Psoas muscle (tissue), 8 donors: ENCODE measurements at regions of chr16 and their contacts with region 1.

Region 1: DNA sequence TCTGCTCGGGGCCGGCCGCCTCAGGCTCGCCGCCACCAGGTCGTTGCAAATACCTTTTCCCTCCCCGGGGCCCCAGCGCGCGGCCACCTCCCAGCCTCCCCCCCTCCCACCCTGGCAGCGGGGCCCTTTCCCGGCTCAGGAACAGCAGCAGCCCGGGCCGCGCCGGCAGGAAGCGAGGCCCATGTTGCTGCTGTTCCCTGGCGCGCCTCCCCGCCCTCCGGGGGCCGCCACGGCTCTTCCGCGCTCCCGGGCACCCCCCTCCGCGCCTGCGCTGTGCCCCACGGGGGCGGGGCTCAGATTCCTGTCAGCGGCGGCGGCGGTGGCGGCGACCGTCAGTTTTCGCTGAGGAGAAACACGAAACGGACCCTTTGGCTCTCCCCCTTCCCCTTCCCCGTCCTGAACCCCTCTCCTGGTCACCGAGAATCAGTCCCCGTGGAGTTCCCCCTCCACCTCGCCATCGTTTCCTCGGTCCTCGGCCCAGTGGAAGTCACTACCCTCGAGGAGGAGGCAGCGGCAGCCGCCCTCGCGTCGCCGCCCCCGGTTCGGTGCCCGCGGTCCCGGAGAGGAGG is at the start of gene NFAT5:
- DNase-seq: peak; percentile 85 to 92
- ATAC-seq: peak; percentile 84 to 96 (median 94)
- H3K4me3 ChIP-seq: peak within 1 kb of the TSS; percentile 93
- H3K27ac ChIP-seq: peak within 1 kb of the TSS; percentile 98
- H3K4me1 ChIP-seq: peaks cover 26% of the 10 kb centered on the region
- H3K27me3 ChIP-seq: no peaks in the 10 kb centered on the region
- CTCF ChIP-seq: peak; percentile 20
- total RNA-seq, gene NFAT5: 18.8 to 27.9 (median 22.4) TPM

Region 2: DNA sequence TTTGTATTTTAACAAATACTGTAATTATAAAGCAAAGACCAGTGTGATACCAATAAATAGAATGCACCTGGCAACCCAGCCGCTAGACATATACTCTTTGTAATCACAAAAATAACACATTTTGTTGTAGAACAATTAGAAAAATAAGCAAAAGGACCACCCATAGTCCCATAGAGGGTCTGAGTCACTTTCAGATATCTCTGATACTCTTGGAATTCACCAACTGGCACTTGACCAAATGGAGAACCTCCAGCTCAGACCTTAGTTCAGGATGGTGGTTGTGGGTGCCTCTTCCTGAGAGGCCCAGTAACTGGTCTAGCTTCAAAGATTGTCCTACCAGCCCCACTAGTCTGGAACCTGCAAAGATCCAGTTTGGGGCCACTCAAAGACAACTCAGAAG is 179.2 kb before region 1 on chr16:
- intact Hi-C with region 1: loop called in 1 of 2 experiments (anchors 2 kb)
- DNase-seq: no peak
- ATAC-seq: no peak
- H3K4me3 ChIP-seq: peak overlapping the region; percentile 74
- H3K27ac ChIP-seq: peak overlapping the region; percentile 88
- H3K4me1 ChIP-seq: peaks cover 11% of the 10 kb centered on the region
- H3K27me3 ChIP-seq: no peaks in the 10 kb centered on the region
- CTCF ChIP-seq: no peak

Region 3: DNA sequence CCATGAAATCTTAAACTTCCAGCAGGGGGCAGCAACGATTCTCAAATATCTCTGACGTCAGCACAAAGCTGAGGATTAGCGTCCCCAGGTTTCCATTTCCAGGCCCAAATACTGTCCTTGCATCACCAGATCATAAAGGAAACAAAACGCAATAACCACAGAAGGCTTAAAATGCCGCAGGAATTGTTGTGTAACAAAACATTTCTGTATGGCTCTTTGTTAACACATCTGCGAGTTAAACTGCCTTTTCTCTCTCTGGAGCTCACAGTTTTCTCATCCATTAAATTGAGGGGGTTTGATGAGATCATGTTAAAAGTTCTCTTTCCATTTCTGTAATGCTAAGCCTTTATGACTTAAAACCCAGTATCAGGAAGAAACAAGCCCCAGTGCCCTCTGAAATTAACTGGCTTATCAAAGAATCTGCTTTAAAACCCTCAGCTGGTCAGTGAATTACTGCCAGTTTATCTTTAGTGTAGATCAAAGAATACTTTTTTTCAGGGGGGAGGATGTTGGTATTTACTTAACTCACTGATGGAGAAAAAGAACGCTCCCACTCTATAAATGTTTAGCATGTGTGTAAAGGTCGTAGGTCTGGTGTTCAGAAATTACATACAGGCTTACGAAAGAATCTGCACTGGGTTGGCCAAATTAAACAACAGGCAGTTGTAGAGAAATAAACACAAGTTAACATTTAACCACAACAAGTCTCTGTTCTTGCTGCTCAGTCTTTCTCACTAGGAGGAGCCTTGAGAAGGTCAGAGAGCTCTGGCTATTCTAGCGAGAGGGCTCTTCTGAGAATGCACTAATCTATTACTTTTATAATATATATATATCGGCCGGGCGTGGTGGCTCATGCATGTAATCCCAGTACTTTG is 169.3 kb before region 1 on chr16:
- intact Hi-C with region 1: loop called in 1 of 2 experiments (anchors 5 kb)
- DNase-seq: peak in 1 of 2 donors; percentile 36
- ATAC-seq: peak; percentile 41 to 66 (median 51)
- H3K4me3 ChIP-seq: peak overlapping the region; percentile 11
- H3K27ac ChIP-seq: peak overlapping the region; percentile 79
- H3K4me1 ChIP-seq: peaks cover 30% of the 10 kb centered on the region
- H3K27me3 ChIP-seq: no peaks in the 10 kb centered on the region
- CTCF ChIP-seq: peak; percentile 69

Region 4: GRCh38 chr16:69443927-69444631 is 121.7 kb before region 1 on chr16:
- intact Hi-C with region 1: loop called in 1 of 2 experiments (anchors 5 kb)
- DNase-seq: peak in 1 of 2 donors; percentile 54
- ATAC-seq: peak; percentile 58 to 75 (median 70)
- H3K4me3 ChIP-seq: peak overlapping the region; percentile 54
- H3K27ac ChIP-seq: peak overlapping the region; percentile 82
- H3K4me1 ChIP-seq: peaks cover 40% of the 10 kb centered on the region
- H3K27me3 ChIP-seq: no peaks in the 10 kb centered on the region
- CTCF ChIP-seq: no peak

Region 5: DNA sequence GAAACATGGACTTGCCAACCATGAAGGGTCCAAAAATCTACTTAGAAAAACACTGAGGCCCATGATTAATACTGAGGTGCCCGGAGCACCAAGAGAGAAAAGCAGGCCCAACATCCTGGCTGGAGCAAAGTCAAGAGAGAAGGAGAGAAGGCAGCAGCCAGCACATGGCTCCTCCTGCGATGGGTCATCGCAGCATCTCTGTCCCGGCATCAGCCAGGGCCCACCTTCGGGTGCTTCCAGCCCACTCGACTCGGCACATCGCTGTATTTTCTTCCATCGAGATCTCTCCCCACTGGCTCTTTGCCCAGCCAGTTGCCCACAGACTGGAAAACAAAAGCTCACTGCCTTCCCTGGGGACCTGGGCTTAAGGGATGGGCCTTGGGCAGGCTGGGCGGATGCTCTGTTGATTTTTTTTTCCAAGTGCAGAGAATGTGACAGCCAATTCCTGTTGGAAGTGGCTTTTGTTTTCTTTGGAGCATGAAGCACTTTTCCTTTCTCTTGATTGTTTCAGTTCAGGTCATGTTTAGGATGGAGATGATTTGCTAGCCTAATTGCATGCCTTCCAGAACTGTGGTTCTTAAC is 83.3 kb before region 1 on chr16:
- intact Hi-C with region 1: loop called in 1 of 2 experiments (anchors 2 kb)
- DNase-seq: peak; percentile 61 to 81
- ATAC-seq: peak; percentile 60 to 76 (median 68)
- H3K4me3 ChIP-seq: peak overlapping the region; percentile 50
- H3K27ac ChIP-seq: peak overlapping the region; percentile 80
- H3K4me1 ChIP-seq: peaks cover 15% of the 10 kb centered on the region
- H3K27me3 ChIP-seq: no peaks in the 10 kb centered on the region
- CTCF ChIP-seq: no peak

Region 6: DNA sequence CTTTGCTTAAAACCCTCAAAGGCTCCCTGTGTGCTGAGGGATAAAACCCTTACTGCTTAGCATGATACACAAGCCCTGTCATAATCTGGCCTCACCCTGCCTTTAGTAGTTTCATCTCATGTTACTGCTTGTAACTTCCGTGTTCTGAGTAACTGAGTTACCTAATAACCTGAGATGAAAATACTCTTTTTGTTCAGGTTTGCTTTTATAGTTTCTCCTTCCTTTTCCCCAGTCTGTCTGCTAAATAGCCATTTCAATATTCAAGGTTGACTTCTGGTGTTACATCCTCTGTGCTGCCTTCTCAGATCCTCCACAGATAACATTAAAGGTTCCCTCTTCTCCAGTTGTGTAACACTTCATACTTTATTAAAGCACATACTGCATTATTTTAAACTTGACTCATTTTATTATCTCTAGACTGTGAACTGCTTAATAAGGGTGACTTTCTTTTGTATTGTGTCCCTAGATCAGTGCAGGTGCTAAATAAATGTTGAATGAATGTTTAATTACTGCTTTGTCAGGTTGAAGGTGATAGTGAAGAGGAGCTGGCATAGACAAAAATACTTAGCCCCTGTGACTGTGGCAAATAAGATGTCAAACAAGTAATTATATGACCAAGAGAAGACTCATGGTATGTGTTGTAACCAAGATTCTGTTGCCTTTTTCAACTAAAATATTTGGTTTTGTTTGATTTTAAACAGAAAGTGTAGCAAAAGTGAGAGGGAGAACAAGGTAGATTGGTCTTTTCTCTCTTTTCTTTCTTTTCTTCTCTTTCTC is 47.8 kb after region 1 on chr16:
- intact Hi-C with region 1: loop called in 1 of 2 experiments (anchors 5 kb)
- DNase-seq: no peak
- ATAC-seq: peak; percentile 80 to 83 (median 83)
- H3K4me3 ChIP-seq: peak overlapping the region; percentile 16
- H3K27ac ChIP-seq: peak overlapping the region; percentile 85
- H3K4me1 ChIP-seq: peaks cover 59% of the 10 kb centered on the region
- H3K27me3 ChIP-seq: no peaks in the 10 kb centered on the region
- CTCF ChIP-seq: no peak